Right ventricle myocardium inferior (tissue), 1 donor: ENCODE measurements at regions of chr6 and their contacts with region 1.

Region 1: GRCh38 chr6:73520688-73521350 is at the start of gene EEF1A1:
- DNase-seq: peak; percentile 98
- ATAC-seq: peak; percentile 93
- total RNA-seq, gene EEF1A1: 1,647 TPM

Region 2: GRCh38 chr6:73566954-73567591 is 46.3 kb after region 1 on chr6:
- intact Hi-C with region 1: loop called (anchors 5 kb)
- DNase-seq: no peak
- ATAC-seq: peak; percentile 16

Region 3: DNA sequence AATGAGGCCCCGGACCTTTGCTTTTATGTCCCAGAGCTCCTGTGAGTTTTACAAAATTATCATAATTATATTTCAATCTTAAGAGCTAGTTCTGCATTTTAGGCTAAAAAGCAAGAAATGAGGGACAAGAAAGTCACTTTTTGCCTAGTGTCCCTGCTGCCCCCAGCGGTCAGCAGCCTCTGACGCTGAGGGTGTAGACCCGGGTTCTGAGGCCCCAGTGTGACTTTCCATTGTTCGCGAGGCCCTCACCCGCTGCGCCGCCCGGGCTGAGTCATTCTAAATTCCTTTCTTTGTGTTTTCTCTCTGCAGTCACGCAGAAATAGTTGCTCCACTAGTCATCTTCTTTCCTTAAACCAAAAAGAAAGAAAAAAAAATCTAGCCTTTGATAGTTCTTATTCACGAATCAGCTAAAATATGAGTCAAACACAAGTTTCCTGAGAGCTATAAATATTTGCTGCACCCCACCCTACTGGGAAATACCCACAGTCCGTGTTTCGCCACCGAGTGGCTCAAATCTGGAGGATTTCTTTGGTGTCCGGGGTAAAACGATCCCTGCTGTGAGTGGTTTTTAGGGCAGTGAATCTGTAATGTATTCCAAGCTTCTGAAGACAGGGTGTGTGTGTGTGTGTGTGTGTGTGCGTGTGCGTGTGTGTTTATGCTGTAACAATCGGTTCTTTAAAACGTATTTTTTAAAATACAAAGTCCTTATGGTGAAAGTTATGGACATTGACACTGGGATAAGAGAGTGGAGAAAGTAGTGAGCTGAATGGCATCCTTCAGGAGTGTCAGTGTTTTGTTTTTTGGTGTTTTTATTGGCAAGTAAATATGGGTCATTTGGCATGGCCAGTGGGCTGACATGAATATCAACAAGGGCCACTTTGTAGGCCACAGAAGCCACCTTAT is 59.7 kb after region 1 on chr6:
- intact Hi-C with region 1: loop called (anchors 2 kb)
- DNase-seq: peak; percentile 88
- ATAC-seq: peak; percentile 88

Region 4: GRCh38 chr6:73653571-73654424 is 133.0 kb after region 1 on chr6 and contains the start of gene SLC17A5:
- intact Hi-C with region 1: loop called (anchors 5 kb)
- DNase-seq: peak; percentile 96
- ATAC-seq: peak; percentile 99
- total RNA-seq, gene SLC17A5: 5.9 TPM

Region 5: DNA sequence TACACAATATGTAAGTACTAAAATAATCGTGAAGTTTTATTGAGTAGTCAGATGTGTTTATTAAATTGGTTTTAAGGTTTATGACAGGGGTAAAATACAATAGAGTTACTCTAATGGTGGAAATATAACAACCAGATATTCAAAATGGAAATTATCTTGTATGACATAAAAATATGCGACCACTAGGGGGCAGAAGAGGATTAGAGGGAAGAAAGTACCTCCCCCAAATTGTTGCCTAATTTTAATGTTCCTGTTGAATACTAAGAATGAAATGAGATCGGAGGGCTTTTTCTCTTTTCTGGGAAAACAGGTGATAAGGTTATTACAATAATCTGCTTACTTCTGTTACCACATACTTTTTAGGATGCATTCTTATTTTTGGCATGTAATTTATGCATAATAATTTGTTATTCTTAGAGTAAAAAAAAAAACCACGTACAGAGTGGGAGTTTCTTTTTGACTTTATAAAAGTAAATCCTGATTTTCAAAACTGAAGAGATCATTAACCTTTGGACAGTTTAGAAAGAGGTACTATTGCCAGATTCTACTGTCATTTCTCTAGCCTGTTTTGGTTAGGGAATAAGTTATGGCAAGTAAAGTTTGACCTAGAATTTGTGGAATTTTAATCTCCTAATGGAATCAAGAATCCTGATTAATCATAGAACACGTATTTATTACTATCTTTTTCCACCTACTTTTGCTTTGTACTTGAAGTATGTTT is 334.3 kb after region 1 on chr6:
- intact Hi-C with region 1: no loop called
- DNase-seq: no peak
- ATAC-seq: no peak

Region 6: GRCh38 chr6:73969971-73970970 is 449.5 kb after region 1 on chr6:
- intact Hi-C with region 1: no loop called
- DNase-seq: no peak
- ATAC-seq: peak; percentile 37